Naive thymus-derived CD4-positive, alpha-beta T cell (primary cell): ENCODE measurements at regions of chr20 and their contacts with region 1.

Region 1: DNA sequence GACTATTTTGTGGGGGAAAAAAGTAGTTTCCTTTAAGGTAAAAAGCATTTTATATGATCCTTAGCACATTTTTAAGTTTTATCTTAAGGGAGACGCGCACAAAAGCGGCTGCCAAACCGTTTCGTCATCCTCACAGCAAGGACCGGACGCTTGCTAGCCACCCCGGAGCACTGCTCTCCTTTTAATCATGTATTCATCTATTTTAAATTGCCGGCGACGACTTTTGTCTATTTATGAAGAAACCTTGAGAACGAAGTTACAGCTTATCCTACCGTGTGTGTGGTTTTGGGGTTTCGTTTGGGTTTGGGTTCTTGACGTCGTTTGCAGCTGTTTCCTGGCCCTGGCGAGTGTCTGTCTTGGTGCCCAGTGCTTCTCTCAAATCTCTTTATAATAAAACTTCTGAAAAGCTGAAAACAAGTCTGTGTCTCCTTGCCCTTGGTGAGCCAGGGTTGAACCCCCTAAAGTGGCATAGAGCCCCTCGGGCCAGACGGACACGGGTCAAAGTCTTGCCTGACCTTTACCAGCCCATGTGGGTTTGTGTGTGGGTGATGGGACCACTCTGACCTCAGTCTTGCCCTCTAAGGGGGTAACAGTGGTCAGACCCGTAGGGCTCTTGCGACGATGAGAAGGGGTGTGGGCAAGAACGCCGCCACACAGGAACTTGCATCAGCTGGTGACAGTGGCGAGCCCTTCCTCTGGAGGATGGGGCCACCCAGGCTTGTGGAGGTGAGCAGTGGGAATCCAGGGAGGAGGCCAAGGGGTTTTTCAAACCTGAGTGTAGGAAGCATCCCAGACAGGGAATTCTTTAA is 117.6 kb downstream of the JPH2 start:
- DNase-seq: peak; percentile 47 to 97 (median 90)
- ATAC-seq: peak; percentile 65
- H3K4me3 ChIP-seq: peak overlapping the region; percentile 60
- H3K4me3 Mint-ChIP-seq: peak overlapping the region; percentile 70 to 93 (median 86)
- H3K27ac ChIP-seq: peak overlapping the region; percentile 97
- H3K27ac Mint-ChIP-seq: peak overlapping the region; percentile 94 to 100 (median 99)
- H3K4me1 ChIP-seq: peaks cover 31 to 77% of the 10 kb centered on the region in 2 donors
- H3K4me1 Mint-ChIP-seq: peaks cover 40 to 96% (median 81%) of the 10 kb centered on the region in 7 donors
- H3K27me3 ChIP-seq: no peaks in the 10 kb centered on the region
- H3K27me3 Mint-ChIP-seq: peaks cover 0 to 16% (median 0%) of the 10 kb centered on the region in 5 donors

Region 2: GRCh38 chr20:43590392-43591323 is 478.7 kb before region 1 on chr20 and contains the start of gene IFT52:
- CTCF ChIA-PET with region 1: no interaction called
- POLR2A ChIA-PET with region 1: no interaction called
- intact Hi-C with region 1: loop called in 1 of 2 experiments (anchors 1 kb)
- DNase-seq: peak; percentile 76 to 89 (median 87)
- ATAC-seq: peak; percentile 98
- H3K4me3 ChIP-seq: peak within 1 kb of the TSS; percentile 90
- H3K4me3 Mint-ChIP-seq: peak within 1 kb of the TSS; percentile 90 to 97 (median 94)
- H3K27ac ChIP-seq: peak within 1 kb of the TSS; percentile 88
- H3K27ac Mint-ChIP-seq: peak within 1 kb of the TSS; percentile 91 to 98 (median 97)
- H3K4me1 ChIP-seq: peaks cover 5 to 10% of the 10 kb centered on the region in 2 donors
- H3K4me1 Mint-ChIP-seq: peaks cover 17 to 21% (median 21%) of the 10 kb centered on the region in 7 donors
- H3K27me3 ChIP-seq: no peaks in the 10 kb centered on the region
- H3K27me3 Mint-ChIP-seq: peaks cover 0 to 5% (median 0%) of the 10 kb centered on the region in 5 donors
- total RNA-seq, gene IFT52: 14.8 to 19.7 (median 16.9) TPM

Region 3: GRCh38 chr20:43942661-43943290 is 126.6 kb before region 1 on chr20:
- CTCF ChIA-PET with region 1: no interaction called
- POLR2A ChIA-PET with region 1: interaction called, 5 read pairs
- intact Hi-C with region 1: loop called in 1 of 2 experiments (anchors 1 kb)
- DNase-seq: peak in 7 of 9 donors; percentile 28 to 56 (median 47)
- ATAC-seq: peak; percentile 72
- H3K4me3 ChIP-seq: no peak overlapping the region
- H3K4me3 Mint-ChIP-seq: peak overlapping the region; percentile 16 to 79 (median 46)
- H3K27ac ChIP-seq: peak overlapping the region; percentile 9
- H3K27ac Mint-ChIP-seq: peak overlapping the region; percentile 42 to 90 (median 72)
- H3K4me1 ChIP-seq: peaks cover 29% of the 10 kb centered on the region in 2 donors
- H3K4me1 Mint-ChIP-seq: peaks cover 61 to 92% (median 68%) of the 10 kb centered on the region in 7 donors
- H3K27me3 ChIP-seq: no peaks in the 10 kb centered on the region
- H3K27me3 Mint-ChIP-seq: peaks cover 0 to 27% (median 0%) of the 10 kb centered on the region in 5 donors

Region 4: DNA sequence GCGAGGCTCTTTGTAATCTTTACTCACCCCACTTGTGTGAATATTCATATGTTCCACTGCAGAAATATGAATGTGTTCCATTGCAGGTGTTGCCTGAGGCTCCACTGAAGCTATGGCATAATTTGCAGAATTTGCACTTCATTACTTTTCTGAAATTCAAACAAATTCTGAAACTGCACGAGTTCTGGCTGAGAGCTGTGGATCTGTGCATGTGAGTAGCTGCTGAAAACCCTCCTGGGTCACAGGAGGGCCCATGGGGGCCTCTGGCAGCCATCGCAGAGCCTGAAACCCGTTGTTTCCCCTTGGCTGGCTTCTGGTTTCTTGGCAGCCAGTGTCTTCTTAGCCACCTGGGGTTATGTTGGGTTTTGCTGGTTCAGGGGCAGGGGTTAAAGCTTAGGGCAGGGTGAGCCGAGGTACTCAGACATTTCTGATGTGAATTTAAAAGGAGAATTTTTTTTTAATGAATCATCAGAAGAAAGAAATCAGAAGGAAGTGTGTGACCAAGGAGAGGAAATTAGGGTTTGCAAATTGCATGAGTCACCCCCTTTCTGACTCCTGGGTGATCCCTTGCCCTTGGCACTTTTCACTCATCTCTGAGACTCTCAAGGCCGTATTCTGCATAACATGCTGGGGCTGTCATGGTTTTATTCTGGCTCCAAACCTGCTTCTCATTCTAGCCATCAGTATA is 114.2 kb before region 1 on chr20:
- CTCF ChIA-PET with region 1: no interaction called
- POLR2A ChIA-PET with region 1: interaction called, 6 read pairs
- intact Hi-C with region 1: loop called (anchors 1 to 2 kb)
- DNase-seq: peak in 3 of 9 donors; percentile 13 to 49 (median 13)
- ATAC-seq: peak; percentile 72
- H3K4me3 ChIP-seq: no peak overlapping the region
- H3K4me3 Mint-ChIP-seq: peak overlapping the region in 7 of 10 donors; percentile 8 to 65 (median 22)
- H3K27ac ChIP-seq: no peak overlapping the region
- H3K27ac Mint-ChIP-seq: peak overlapping the region in 2 of 9 donors; percentile 28 to 58
- H3K4me1 ChIP-seq: peaks cover 72 to 76% of the 10 kb centered on the region in 2 donors
- H3K4me1 Mint-ChIP-seq: peaks cover 72 to 96% (median 85%) of the 10 kb centered on the region in 7 donors
- H3K27me3 ChIP-seq: peaks cover 0 to 5% of the 10 kb centered on the region in 2 donors
- H3K27me3 Mint-ChIP-seq: peaks cover 0 to 45% (median 0%) of the 10 kb centered on the region in 5 donors

Region 5: GRCh38 chr20:44018259-44018941 is 51.0 kb before region 1 on chr20:
- CTCF ChIA-PET with region 1: no interaction called
- POLR2A ChIA-PET with region 1: no interaction called
- intact Hi-C with region 1: loop called in 1 of 2 experiments (anchors 5 kb)
- DNase-seq: no peak
- ATAC-seq: no peak
- H3K4me3 ChIP-seq: no peak overlapping the region
- H3K4me3 Mint-ChIP-seq: peak overlapping the region in 3 of 10 donors; percentile 5 to 83 (median 70)
- H3K27ac ChIP-seq: no peak overlapping the region
- H3K27ac Mint-ChIP-seq: peak overlapping the region in 1 of 9 donors; percentile 17
- H3K4me1 ChIP-seq: peaks cover 26 to 33% of the 10 kb centered on the region in 2 donors
- H3K4me1 Mint-ChIP-seq: peaks cover 21 to 56% (median 43%) of the 10 kb centered on the region in 7 donors
- H3K27me3 ChIP-seq: no peaks in the 10 kb centered on the region
- H3K27me3 Mint-ChIP-seq: peaks cover 0 to 69% (median 5%) of the 10 kb centered on the region in 5 donors

Region 6: GRCh38 chr20:44056010-44056698 is 13.3 kb before region 1 on chr20:
- CTCF ChIA-PET with region 1: interaction called, 12 read pairs
- POLR2A ChIA-PET with region 1: interaction called, 75 read pairs
- intact Hi-C with region 1: loop called (anchors 1 kb)
- DNase-seq: peak in 8 of 9 donors; percentile 41 to 83 (median 74)
- ATAC-seq: peak; percentile 96
- H3K4me3 ChIP-seq: no peak overlapping the region
- H3K4me3 Mint-ChIP-seq: no peak overlapping the region
- H3K27ac ChIP-seq: no peak overlapping the region
- H3K27ac Mint-ChIP-seq: peak overlapping the region in 7 of 9 donors; percentile 6 to 85 (median 33)
- H3K4me1 ChIP-seq: peaks cover 0 to 9% of the 10 kb centered on the region in 2 donors
- H3K4me1 Mint-ChIP-seq: peaks cover 10 to 49% (median 30%) of the 10 kb centered on the region in 7 donors
- H3K27me3 ChIP-seq: no peaks in the 10 kb centered on the region
- H3K27me3 Mint-ChIP-seq: peaks cover 0 to 19% (median 0%) of the 10 kb centered on the region in 5 donors

Region 7: GRCh38 chr20:44271915-44272663 is 202.7 kb after region 1 on chr20:
- CTCF ChIA-PET with region 1: no interaction called
- POLR2A ChIA-PET with region 1: no interaction called
- intact Hi-C with region 1: no loop called
- DNase-seq: peak in 3 of 9 donors; percentile 7 to 41 (median 8)
- ATAC-seq: peak; percentile 48
- H3K4me3 ChIP-seq: no peak overlapping the region
- H3K4me3 Mint-ChIP-seq: no peak overlapping the region
- H3K27ac ChIP-seq: no peak overlapping the region
- H3K27ac Mint-ChIP-seq: no peak overlapping the region
- H3K4me1 ChIP-seq: no peaks in the 10 kb centered on the region
- H3K4me1 Mint-ChIP-seq: peaks cover 0 to 2% (median 0%) of the 10 kb centered on the region in 7 donors
- H3K27me3 ChIP-seq: no peaks in the 10 kb centered on the region
- H3K27me3 Mint-ChIP-seq: no peaks in the 10 kb centered on the region